ENCODE measurements at regions of chr2 and their contacts with region 1.

Region 1: GRCh38 chr2:218745559-218746469 is 35.2 kb downstream of the TTLL4 start:
- DNase-seq: peak; percentile 8
- H3K4me3 Mint-ChIP-seq: no peak overlapping the region
- H3K27ac Mint-ChIP-seq: peak overlapping the region; percentile 21
- H3K4me1 Mint-ChIP-seq: no peaks in the 10 kb centered on the region
- H3K27me3 Mint-ChIP-seq: no peaks in the 10 kb centered on the region
- CTCF ChIP-seq: no peak

Region 2: GRCh38 chr2:218733171-218734021 is 12.4 kb before region 1 on chr2:
- CTCF ChIA-PET with region 1: interaction called, 10 read pairs
- POLR2A ChIA-PET with region 1: interaction called, 3 read pairs
- intact Hi-C with region 1: no loop called
- DNase-seq: peak; percentile 91
- H3K4me3 Mint-ChIP-seq: peak overlapping the region; percentile 38
- H3K27ac Mint-ChIP-seq: peak overlapping the region; percentile 83
- H3K4me1 Mint-ChIP-seq: peaks cover 37% of the 10 kb centered on the region
- H3K27me3 Mint-ChIP-seq: no peaks in the 10 kb centered on the region
- CTCF ChIP-seq: no peak